PC-3 (cell line): ENCODE measurements at regions of chr13 and their contacts with region 1.

Region 1: DNA sequence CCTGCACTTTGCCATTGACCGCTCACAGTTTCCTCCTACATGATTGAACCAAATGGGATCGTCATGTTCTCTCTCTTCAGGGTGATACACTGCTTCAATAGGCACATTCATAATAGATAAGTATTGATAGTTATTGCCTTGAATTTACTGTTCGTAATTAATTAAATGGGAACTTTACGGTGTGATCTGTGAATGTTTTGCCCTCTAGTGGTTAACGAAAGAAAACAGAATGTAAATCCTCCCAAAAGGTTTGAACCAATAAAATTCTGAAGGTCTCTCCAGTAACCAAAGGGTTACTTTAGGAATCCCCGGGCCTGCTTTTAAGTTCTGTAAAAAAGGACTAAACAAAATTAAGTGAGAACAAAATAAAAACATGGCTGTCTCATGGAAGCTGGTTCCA is 389.3 kb downstream of the DACH1 start:
- DNase-seq: peak; percentile 30
- ATAC-seq: no peak
- H3K4me3 ChIP-seq: 0 out of 2 replicates have a peak overlapping the region, but pooled peaks have one; percentile 42
- H3K27ac ChIP-seq: no peak overlapping the region
- H3K4me1 ChIP-seq: no peaks in the 10 kb centered on the region
- H3K27me3 ChIP-seq: no peaks in the 10 kb centered on the region
- CTCF ChIP-seq: peak; percentile 72

Region 2: DNA sequence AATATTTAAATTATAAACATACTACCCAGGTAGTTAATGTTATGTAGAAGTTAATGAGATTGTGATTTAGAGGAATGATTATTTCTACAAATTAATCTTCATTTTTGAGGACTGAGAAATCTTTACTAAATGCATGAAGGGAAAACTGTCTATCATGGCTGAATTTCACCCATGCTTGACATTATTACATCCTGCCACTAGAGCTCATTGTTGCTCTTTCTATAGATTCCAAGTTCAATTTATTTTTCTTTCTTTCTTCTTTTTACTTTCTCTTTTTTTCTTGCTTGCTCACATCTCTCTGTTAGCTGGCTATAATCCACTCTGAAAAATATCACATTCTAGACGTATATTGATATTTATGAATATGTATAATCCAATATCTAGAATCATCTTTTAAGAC is 864.4 kb before region 1 on chr13:
- CTCF ChIA-PET with region 1: no interaction called
- POLR2A ChIA-PET with region 1: no interaction called
- intact Hi-C with region 1: loop called (anchors 10 kb)
- DNase-seq: peak; percentile 35
- ATAC-seq: no peak
- H3K4me3 ChIP-seq: no peak overlapping the region
- H3K27ac ChIP-seq: no peak overlapping the region
- H3K4me1 ChIP-seq: no peaks in the 10 kb centered on the region
- H3K27me3 ChIP-seq: no peaks in the 10 kb centered on the region; the same call in 1 of the 2 replicates
- CTCF ChIP-seq: peak; percentile 63

Region 3: GRCh38 chr13:71240911-71241310 is 236.8 kb before region 1 on chr13:
- CTCF ChIA-PET with region 1: no interaction called
- POLR2A ChIA-PET with region 1: no interaction called
- intact Hi-C with region 1: loop called (anchors 5 kb)
- DNase-seq: peak; percentile 35
- ATAC-seq: peak; percentile 86
- H3K4me3 ChIP-seq: no peak overlapping the region
- H3K27ac ChIP-seq: no peak overlapping the region
- H3K4me1 ChIP-seq: no peaks in the 10 kb centered on the region
- H3K27me3 ChIP-seq: no peaks in the 10 kb centered on the region
- CTCF ChIP-seq: peak; percentile 63

Region 4: DNA sequence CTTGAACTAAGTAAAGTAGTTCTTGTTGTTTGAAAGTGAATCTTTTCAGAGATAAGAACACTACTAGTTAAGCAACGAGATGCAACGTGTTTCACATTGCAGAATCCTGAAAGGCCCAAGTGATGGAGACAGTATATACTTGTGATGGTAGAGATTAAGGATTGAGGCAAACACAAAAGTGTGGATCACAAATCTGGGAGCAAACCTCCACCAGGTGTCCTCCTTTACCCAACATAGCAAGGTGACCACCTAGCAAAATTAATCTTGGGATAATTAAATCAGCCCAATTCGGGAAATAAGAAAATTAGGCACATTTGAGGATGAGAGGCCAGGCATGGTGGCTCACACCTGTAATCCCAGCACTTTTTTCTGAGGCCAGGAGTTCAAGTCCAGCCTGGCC is 174.6 kb before region 1 on chr13:
- CTCF ChIA-PET with region 1: no interaction called
- POLR2A ChIA-PET with region 1: no interaction called
- intact Hi-C with region 1: loop called (anchors 5 kb)
- DNase-seq: no peak
- ATAC-seq: peak; percentile 43; the same call in 1 of the 2 replicates
- H3K4me3 ChIP-seq: no peak overlapping the region
- H3K27ac ChIP-seq: no peak overlapping the region
- H3K4me1 ChIP-seq: no peaks in the 10 kb centered on the region
- H3K27me3 ChIP-seq: no peaks in the 10 kb centered on the region
- CTCF ChIP-seq: peak; percentile 24; the same call in 1 of the 2 replicates

Region 5: DNA sequence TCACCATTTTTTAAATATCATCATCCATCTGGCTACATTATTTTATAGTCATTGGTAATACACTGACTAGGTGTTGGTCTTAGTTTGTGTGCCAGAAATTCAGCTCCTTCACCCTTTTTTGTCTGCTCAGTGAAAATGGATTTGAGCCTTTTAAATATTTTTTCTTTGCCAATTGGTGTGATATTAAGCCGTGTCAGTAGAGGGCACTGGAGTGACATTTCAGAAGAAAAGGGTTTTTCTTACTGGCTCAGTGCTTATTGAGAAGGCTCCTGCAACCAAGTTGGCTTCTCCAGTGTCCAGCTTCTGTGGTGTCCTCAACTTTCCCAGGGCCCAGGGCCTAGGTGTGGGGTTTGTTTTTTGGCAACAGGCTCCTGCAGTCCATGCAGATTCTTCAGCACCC is 157.3 kb before region 1 on chr13:
- CTCF ChIA-PET with region 1: no interaction called
- POLR2A ChIA-PET with region 1: no interaction called
- intact Hi-C with region 1: loop called (anchors 5 kb)
- DNase-seq: peak; percentile 38
- ATAC-seq: no peak
- H3K4me3 ChIP-seq: no peak overlapping the region
- H3K27ac ChIP-seq: no peak overlapping the region
- H3K4me1 ChIP-seq: no peaks in the 10 kb centered on the region
- H3K27me3 ChIP-seq: 0 out of 2 replicates have a peak, but pooled peaks cover 2% of the 10 kb centered on the region
- CTCF ChIP-seq: peak; percentile 56

Region 6: DNA sequence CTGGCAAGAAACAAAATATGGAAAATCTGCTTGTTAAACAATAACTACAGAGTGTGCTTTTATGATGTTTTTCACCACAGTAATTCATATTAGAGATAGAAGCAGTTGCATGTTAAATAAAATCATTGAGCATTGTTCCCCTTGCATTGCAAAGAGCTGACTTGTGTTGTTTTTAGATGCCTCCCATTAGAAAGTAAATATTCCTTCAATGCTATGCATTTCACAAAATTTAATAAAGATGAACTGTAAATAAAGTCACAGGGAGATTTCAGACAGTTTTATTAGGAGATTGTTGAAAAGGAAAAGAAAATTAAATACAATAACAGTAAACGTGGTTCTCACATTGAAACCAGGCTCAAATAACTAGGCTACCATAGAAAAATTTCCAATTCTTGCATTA is 40.0 kb before region 1 on chr13:
- CTCF ChIA-PET with region 1: no interaction called
- POLR2A ChIA-PET with region 1: no interaction called
- intact Hi-C with region 1: no loop called
- DNase-seq: no peak
- ATAC-seq: no peak
- H3K4me3 ChIP-seq: no peak overlapping the region
- H3K27ac ChIP-seq: no peak overlapping the region
- H3K4me1 ChIP-seq: no peaks in the 10 kb centered on the region
- H3K27me3 ChIP-seq: no peaks in the 10 kb centered on the region
- CTCF ChIP-seq: no peak

Region 7: DNA sequence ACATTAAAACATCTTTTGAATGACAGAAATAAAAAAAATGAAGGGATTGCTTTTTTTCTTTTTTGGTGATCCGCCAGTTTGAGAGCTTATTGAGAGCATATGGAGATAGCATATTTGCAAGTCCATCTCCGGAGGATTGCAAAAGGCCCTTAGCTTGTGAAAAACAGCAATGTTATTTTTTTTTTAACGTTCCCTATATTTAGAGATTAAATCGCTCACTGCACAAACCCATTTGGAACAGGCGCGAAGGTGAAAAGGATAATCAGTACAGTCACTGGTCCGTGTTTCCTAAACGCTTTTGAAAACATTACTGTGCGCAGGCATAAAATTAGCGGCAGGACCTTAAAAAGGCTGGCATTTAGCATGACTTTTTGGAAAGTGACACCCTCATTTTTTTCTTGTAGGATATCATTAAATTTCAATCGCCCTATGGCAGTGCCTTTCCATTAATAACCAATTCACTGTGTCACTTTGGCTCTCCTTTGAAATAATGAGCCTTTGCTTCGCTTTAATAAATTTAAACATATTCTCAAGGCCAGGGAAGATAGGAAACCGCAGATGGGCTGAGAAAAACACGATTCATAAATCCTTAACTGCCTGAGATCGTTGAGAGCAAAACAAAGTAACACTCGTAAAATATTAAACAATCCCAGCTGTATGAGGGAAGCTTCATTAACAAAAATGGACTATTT is 47.0 kb after region 1 on chr13:
- CTCF ChIA-PET with region 1: no interaction called
- POLR2A ChIA-PET with region 1: no interaction called
- intact Hi-C with region 1: no loop called
- DNase-seq: no peak
- ATAC-seq: no peak
- H3K4me3 ChIP-seq: no peak overlapping the region
- H3K27ac ChIP-seq: no peak overlapping the region
- H3K4me1 ChIP-seq: no peaks in the 10 kb centered on the region
- H3K27me3 ChIP-seq: no peaks in the 10 kb centered on the region
- CTCF ChIP-seq: no peak

Region 8: GRCh38 chr13:71759651-71760511 is 282.1 kb after region 1 on chr13:
- CTCF ChIA-PET with region 1: interaction called, 12 read pairs
- POLR2A ChIA-PET with region 1: no interaction called
- intact Hi-C with region 1: no loop called
- DNase-seq: no peak
- ATAC-seq: peak; percentile 38
- H3K4me3 ChIP-seq: no peak overlapping the region
- H3K27ac ChIP-seq: no peak overlapping the region
- H3K4me1 ChIP-seq: no peaks in the 10 kb centered on the region
- H3K27me3 ChIP-seq: no peaks in the 10 kb centered on the region
- CTCF ChIP-seq: no peak